IMR-90 (cell line): ENCODE measurements at regions of chr1 and their contacts with region 1.

Region 1: GRCh38 chr1:36187800-36188593 is 32.0 kb downstream of the MAP7D1 start:
- DNase-seq: peak; percentile 92
- ATAC-seq: peak; percentile 94
- H3K4me3 ChIP-seq: no peak overlapping the region
- H3K27ac ChIP-seq: peak overlapping the region; percentile 68
- H3K4me1 ChIP-seq: peaks cover 5% of the 10 kb centered on the region
- H3K27me3 ChIP-seq: no peaks in the 10 kb centered on the region
- CTCF ChIP-seq: peak; percentile 91
- POLR2A ChIP-seq: peak; percentile 61
- RAD21 ChIP-seq: peak; percentile 93

Region 2: DNA sequence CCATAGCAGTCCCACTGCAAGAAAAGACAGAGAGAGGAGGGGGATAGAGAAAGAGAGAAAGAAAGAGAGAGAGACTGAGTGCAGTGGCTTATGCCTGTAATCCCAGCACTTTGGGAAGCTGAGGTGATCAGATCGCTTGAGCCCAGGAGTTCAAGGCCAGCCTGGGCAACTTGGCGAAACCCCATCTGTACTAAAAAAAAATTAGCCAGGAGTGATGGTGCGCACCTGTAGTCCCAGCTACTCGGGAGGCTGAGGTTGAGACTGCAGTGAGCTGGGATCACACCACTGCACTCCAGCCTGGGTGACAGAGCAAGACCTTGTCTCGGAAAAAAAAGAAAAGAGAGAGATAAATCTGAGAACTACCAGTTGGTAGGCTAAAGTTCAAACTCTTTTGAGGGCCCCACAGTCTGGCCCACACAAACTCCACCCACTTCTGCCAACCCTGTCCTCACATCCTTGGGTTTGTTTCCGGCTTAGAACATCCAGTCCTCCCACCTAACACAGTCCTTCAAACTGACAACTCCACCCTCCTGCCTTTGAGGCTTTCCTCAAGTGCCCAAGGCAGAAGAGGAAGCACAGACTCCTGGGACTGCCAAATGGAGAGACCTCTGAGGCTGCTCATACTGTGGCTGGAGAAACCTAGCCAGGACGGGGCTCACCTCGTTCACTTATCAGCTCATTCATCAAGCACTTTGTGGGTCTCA is 594.9 kb before region 1 on chr1:
- CTCF ChIA-PET with region 1: no interaction called
- POLR2A ChIA-PET with region 1: no interaction called
- dilution Hi-C with region 1: no loop called
- in situ Hi-C with region 1: no loop called
- intact Hi-C with region 1: no loop called
- DNase-seq: no peak
- ATAC-seq: no peak
- H3K4me3 ChIP-seq: no peak overlapping the region
- H3K27ac ChIP-seq: no peak overlapping the region
- H3K4me1 ChIP-seq: no peaks in the 10 kb centered on the region
- H3K27me3 ChIP-seq: no peaks in the 10 kb centered on the region
- CTCF ChIP-seq: no peak
- POLR2A ChIP-seq: no peak
- RAD21 ChIP-seq: no peak

Region 3: DNA sequence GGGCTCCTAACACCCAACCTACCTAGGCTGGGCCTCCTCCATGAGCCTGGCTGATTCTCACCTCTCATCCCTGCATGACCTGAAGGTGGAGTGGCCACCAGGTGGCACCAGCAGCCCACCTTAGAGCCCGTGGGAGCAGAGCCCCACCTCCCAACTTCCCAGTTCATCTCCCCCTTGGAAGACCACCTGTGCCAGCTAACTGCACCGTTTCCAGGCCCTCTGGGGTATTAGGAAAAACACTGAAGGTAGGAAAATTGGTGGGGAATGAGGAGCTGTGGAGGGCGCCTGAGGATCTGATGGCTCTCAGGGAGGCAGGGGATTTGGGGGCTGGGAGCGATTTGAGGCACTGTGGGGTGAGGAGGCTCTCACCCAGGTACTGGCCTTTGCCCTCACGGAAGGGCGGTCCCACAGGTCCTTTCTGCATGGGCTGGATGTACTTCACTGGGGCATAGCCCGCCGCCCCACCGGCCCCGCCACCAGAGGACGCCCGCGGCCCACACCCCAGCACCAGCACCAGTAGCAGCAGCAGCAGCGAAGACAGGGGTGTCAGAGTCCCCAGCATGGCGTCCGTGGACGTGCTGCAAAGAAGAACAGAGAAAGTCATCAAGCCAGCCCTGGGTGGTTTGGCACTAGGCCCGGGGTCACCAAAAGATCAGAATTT is 88.2 kb before region 1 on chr1:
- CTCF ChIA-PET with region 1: no interaction called
- POLR2A ChIA-PET with region 1: no interaction called
- dilution Hi-C with region 1: no loop called
- in situ Hi-C with region 1: loop called (anchors 5 kb)
- intact Hi-C with region 1: loop called (anchors 1 kb)
- DNase-seq: peak; percentile 73
- ATAC-seq: peak; percentile 94
- H3K4me3 ChIP-seq: no peak overlapping the region
- H3K27ac ChIP-seq: no peak overlapping the region
- H3K4me1 ChIP-seq: no peaks in the 10 kb centered on the region
- H3K27me3 ChIP-seq: no peaks in the 10 kb centered on the region
- CTCF ChIP-seq: peak; percentile 92
- POLR2A ChIP-seq: no peak
- RAD21 ChIP-seq: peak; percentile 98

Region 4: DNA sequence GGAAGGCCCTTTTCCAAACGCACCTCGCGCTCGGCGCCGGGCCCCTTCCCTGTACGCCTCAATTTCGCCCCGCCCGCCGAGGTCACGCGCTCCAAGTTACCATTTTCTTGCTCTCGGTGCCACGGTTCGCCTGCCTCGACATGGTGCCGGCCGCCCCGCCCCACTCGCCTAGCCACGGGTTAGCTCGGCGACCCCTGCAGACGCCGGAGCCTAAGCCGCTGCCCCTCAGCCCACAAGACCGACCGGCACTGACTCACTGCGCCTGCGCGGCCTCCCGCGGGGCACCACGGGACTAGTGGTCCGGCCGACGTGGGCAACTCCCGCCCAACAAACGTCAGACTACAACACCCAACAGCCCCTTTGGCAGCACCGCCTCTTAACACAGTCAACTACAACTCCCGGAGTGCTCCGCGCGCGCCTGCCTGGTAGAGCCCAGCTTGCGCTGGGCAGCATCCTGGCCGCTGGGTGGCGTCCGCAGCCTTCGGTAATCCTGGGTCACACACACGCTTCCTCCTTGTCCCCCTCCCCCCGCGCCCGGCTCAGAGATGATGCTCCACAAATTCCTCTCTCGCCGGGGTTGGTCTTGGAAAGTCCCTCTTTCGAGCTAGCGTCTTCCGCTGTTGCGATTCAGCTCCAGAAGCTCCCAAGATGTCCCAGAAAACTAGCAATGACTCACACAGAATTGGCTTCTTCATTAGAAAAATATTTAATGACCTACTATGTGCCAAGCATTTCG is 38.6 kb before region 1 on chr1 and contains the start of gene TRAPPC3:
- CTCF ChIA-PET with region 1: interaction called, 31 read pairs
- POLR2A ChIA-PET with region 1: interaction called, 8 read pairs
- dilution Hi-C with region 1: no loop called
- in situ Hi-C with region 1: no loop called
- intact Hi-C with region 1: loop called (anchors 1 kb)
- DNase-seq: peak; percentile 100
- ATAC-seq: peak; percentile 90
- H3K4me3 ChIP-seq: peak within 1 kb of the TSS; percentile 67
- H3K27ac ChIP-seq: peak within 1 kb of the TSS; percentile 97
- H3K4me1 ChIP-seq: peaks cover 17% of the 10 kb centered on the region
- H3K27me3 ChIP-seq: no peaks in the 10 kb centered on the region
- CTCF ChIP-seq: peak; percentile 99
- POLR2A ChIP-seq: peak; percentile 80
- RAD21 ChIP-seq: peak; percentile 97
- total RNA-seq, gene TRAPPC3: 76.0 and 101 TPM in 2 replicates

Region 5: DNA sequence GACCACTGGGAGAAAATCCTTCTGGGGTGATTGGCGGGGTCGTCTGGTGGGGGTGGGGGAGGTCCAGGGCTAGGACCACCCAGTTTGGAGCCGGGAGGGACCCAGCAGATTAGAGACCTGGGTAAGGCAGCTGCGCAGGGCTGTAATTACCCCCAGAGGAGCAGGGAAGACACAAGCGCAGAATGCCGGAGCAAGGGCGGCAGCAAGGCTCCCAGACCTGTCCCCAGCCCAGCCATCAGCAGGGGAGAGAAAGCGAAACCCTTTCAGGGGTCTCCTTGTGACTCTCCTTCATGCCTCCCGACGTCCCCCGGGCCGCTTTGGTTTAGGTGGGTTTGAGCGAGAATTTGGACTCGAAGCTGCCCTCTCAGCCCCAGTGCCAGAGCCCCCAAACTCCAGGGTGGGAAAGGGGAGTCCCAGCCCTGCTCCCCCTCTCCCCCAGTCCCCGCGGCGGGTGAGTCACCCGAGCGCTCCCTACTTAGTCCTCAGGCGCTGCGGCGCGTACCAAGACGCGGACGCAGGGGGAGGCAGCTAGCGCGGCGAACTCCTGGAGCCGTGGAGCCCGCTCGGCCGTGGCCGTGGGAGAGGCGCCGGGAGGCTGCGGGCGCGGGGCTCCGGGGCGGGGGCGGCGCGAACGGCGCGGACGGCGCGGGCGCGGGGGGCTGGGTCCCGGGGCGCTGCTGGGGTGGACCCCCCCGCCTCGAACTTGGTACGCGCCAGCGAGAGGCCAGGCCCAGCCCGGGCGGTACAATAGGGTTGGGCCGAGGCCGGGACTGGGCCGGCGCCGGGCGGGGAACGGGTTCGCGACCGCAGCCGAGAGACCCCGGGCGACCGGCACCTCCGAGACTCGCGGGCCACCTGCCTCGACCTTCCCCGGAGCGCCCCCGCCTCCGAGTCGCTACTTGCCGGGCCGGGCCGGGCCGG is 32.3 kb before region 1 on chr1 and contains the start of gene MAP7D1:
- CTCF ChIA-PET with region 1: interaction called, 31 read pairs
- POLR2A ChIA-PET with region 1: no interaction called
- dilution Hi-C with region 1: no loop called
- in situ Hi-C with region 1: no loop called
- intact Hi-C with region 1: no loop called
- DNase-seq: peak; percentile 80
- ATAC-seq: peak; percentile 84
- H3K4me3 ChIP-seq: peak within 1 kb of the TSS; percentile 98
- H3K27ac ChIP-seq: peak within 1 kb of the TSS; percentile 97
- H3K4me1 ChIP-seq: peaks cover 29% of the 10 kb centered on the region
- H3K27me3 ChIP-seq: no peaks in the 10 kb centered on the region
- CTCF ChIP-seq: no peak
- POLR2A ChIP-seq: peak; percentile 90
- RAD21 ChIP-seq: no peak
- total RNA-seq, gene MAP7D1: 30.8 and 32.3 TPM in 2 replicates

Region 6: DNA sequence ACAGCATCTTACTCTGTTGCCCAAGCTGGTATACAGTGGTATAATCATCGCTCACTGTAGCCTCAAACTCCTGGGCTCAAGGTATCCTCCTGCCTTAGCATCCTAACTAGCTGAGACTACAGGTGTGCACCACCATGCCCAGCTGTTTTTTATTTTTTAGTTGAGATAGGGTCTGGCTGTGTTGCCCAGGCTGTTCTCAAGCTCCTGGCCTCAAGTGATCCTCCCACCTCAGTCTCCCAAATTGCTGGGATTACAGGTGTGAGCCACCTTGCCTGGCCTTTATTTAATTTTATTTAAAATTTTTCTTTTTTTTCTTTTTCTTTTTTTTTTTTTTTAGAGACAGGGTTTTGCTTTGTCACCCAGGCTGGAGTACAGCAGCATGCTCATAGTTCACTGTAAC is 22.9 kb before region 1 on chr1:
- CTCF ChIA-PET with region 1: interaction called, 5 read pairs
- POLR2A ChIA-PET with region 1: interaction called, 11 read pairs
- dilution Hi-C with region 1: no loop called
- in situ Hi-C with region 1: no loop called
- intact Hi-C with region 1: no loop called
- DNase-seq: no peak
- ATAC-seq: no peak
- H3K4me3 ChIP-seq: no peak overlapping the region
- H3K27ac ChIP-seq: no peak overlapping the region
- H3K4me1 ChIP-seq: peaks cover 15% of the 10 kb centered on the region
- H3K27me3 ChIP-seq: no peaks in the 10 kb centered on the region
- CTCF ChIP-seq: no peak
- POLR2A ChIP-seq: no peak
- RAD21 ChIP-seq: no peak

Region 7: DNA sequence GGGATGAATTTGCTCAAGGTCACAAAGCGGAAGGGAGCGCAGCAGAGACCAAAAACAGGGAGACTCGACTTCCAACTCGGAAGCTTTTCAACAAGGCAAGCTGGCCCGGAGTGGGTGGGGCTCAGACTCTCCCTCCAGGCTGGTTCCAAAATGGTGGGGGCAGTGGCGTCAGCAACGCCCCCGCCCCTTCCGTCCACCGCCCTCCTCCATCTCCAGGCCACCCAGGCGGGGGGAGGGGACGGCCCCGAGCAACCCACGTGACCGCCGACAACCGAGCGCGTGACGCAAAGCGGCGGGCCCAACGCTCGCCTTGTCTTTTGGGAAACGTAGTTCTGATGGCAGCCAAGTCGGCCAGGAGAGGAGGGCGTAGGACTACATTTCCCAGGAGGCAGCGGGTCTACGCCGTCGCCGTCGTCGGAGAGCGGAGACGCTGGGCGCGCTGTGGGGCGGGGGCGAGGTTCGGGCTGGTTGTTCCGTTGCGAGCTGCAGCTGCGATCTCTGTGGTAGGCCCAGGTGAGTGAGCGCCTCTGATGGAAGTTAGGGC is 36.1 kb after region 1 on chr1 and contains the start of gene THRAP3:
- CTCF ChIA-PET with region 1: interaction called, 3 read pairs
- POLR2A ChIA-PET with region 1: interaction called, 14 read pairs
- dilution Hi-C with region 1: no loop called
- in situ Hi-C with region 1: no loop called
- intact Hi-C with region 1: no loop called
- DNase-seq: peak; percentile 99
- ATAC-seq: peak; percentile 96
- H3K4me3 ChIP-seq: peak within 1 kb of the TSS; percentile 72
- H3K27ac ChIP-seq: peak within 1 kb of the TSS; percentile 94
- H3K4me1 ChIP-seq: peaks cover 3% of the 10 kb centered on the region
- H3K27me3 ChIP-seq: no peaks in the 10 kb centered on the region
- CTCF ChIP-seq: no peak
- POLR2A ChIP-seq: peak; percentile 95
- RAD21 ChIP-seq: 0 out of 2 replicates have a peak, but pooled peaks have one; percentile 17
- total RNA-seq, gene THRAP3: 66.5 and 73.9 TPM in 2 replicates

Region 8: DNA sequence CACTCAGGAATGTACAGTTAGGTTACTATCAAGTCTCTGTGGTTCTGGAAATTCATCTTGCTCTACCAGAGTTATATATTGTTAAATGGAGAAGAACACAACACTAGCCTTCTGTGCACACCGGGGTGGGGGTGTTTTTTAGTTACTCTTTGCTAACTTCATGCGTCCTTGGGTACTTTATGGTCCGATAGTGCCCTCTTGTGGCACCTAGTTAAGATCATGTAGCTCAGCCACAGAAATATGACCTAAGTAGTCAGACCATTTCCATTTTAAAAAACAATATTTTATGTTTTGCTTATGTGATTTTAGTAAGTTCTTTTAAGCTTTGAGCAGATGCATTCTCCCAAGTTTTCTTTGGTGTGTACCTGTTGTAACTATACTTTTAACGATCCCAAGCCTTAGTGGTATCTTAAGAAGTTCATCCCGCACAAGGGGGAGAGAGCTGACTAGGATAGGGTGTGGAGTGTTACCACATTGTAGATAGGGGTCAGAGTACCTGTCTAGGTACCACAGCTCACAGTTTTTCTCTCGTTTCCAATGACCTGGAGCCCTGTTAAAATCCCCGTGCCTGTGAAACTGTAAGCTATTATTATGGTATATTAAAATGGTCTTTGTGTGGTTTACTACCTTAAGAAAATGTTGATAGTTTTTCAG is 97.6 kb after region 1 on chr1:
- CTCF ChIA-PET with region 1: interaction called, 6 read pairs
- POLR2A ChIA-PET with region 1: no interaction called
- dilution Hi-C with region 1: no loop called
- in situ Hi-C with region 1: no loop called
- intact Hi-C with region 1: loop called (anchors 1 kb)
- DNase-seq: peak; percentile 92
- ATAC-seq: peak; percentile 97
- H3K4me3 ChIP-seq: no peak overlapping the region
- H3K27ac ChIP-seq: no peak overlapping the region
- H3K4me1 ChIP-seq: peaks cover 3% of the 10 kb centered on the region
- H3K27me3 ChIP-seq: no peaks in the 10 kb centered on the region
- CTCF ChIP-seq: peak; percentile 85
- POLR2A ChIP-seq: no peak
- RAD21 ChIP-seq: peak; percentile 85